ENCODE measurements at regions of chr2 and their contacts with region 1.

Region 1: GRCh38 chr2:98757904-98758421 is 27.0 kb upstream of the MGAT4A start:
- DNase-seq: peak; percentile 98
- H3K4me3 ChIP-seq: no peak overlapping the region
- H3K27ac ChIP-seq: peak overlapping the region; percentile 66
- H3K4me1 ChIP-seq: peaks cover 20% of the 10 kb centered on the region
- H3K27me3 ChIP-seq: no peaks in the 10 kb centered on the region
- CTCF ChIP-seq: peak in 1 of 2 donors; percentile 3
- POLR2A ChIP-seq: peak; percentile 62

Region 2: DNA sequence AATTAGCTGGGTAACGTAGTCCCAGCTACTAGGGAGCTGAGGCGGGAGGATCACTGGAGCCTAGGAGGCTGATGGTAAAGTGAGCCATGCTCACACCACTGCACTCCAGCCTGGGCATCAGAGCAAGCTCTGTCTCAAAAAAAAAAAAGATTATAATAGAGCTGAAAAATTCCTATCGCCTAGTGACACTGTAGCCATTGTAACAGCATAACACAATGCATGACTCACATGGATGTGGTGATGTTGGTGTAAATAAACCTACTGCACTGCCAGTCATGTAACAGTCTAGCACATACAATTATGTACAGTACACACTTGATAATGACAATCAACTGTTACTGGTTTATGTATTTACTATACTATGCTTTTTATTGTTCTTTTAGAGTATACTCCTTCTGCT is 66.7 kb before region 1 on chr2:
- CTCF ChIA-PET with region 1: no interaction called
- POLR2A ChIA-PET with region 1: no interaction called
- dilution Hi-C with region 1: no loop called
- intact Hi-C with region 1: loop called (anchors 1 kb)
- DNase-seq: peak; percentile 84
- H3K4me3 ChIP-seq: no peak overlapping the region
- H3K27ac ChIP-seq: peak overlapping the region; percentile 55
- H3K4me1 ChIP-seq: peaks cover 14% of the 10 kb centered on the region
- H3K27me3 ChIP-seq: no peaks in the 10 kb centered on the region
- CTCF ChIP-seq: no peak
- POLR2A ChIP-seq: no peak

Region 3: DNA sequence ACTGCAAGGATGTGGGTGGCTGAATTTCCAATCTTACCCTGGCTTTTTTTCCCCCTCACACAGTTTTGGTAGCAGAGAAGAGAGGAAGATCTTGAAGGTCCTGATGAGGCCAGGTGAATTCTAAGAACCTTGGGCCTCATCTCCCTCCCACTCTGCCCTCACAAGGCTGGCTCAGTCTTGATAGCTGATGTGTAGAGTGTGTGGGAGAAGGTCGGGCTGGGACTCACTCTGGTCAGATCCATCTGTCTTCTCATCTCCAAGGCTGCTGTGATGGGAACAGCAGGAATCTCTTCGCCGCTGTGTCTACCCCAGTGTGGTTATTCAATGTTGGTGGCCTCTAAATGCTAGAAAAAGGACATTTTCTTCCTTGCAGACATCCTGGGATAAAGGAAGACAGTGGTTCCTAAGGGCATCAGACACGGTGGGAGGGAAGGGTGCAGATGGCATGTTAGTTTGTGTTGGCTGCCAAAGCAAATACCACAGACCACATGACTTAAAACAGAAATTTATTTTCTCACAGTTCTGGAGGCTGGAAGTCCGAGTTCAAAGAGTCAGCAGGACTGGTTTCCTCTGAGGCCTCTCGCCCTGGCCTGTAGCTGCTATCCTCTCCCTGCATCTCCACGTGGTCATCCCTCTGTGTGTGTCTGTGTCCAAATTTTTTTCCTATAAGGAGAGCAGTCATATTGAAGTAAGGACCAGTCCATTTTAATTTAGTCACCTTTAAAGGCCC is 10.6 kb after region 1 on chr2:
- CTCF ChIA-PET with region 1: interaction called, 8 read pairs
- POLR2A ChIA-PET with region 1: no interaction called
- dilution Hi-C with region 1: no loop called
- intact Hi-C with region 1: loop called (anchors 1 kb)
- DNase-seq: peak; percentile 83
- H3K4me3 ChIP-seq: no peak overlapping the region
- H3K27ac ChIP-seq: peak overlapping the region; percentile 77
- H3K4me1 ChIP-seq: peaks cover 17% of the 10 kb centered on the region
- H3K27me3 ChIP-seq: no peaks in the 10 kb centered on the region
- CTCF ChIP-seq: no peak
- POLR2A ChIP-seq: no peak

Region 4: DNA sequence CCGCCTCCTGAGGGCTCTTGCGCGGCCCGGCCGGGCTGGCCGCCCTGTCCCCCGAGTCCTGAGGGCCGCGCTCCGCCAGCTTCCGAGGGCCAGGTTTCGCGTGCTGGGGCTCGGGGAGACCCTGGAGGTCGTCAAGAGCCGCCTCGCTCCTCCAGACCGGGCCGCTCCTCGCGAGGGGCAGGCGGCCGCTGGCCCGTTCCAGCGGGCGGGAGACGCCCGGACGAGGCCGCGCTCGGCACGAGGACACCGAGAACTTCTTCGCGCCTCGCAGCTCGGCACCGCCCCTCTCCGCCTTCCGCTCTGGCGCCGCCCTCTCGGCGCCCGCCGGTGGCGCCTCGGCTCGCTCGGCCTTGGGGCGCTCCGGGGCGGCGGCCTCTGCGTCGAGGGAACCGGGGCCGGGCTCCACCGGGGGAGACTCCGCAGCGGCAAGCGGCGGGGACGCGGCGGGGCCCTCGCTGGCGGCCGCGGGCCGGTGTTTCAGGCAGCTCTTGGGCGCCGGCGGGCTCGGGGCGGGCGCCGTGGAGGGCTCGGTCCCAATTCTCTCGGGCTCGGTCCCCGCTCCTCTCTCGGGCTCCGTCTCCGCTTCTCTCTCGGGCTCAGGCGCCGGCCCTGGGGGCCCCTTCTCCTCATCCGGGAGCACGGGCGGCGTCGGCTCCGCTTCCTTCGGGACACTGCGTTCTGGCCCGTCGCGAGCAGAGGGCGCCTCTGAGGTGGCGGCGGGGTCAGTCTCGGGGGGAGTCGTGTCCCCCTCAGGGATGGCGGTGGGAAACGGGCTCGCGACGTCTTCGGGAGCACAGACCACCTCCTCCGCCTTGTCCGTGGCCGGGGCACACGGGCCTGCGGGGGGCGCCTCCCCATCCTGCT is 64.6 kb after region 1 on chr2:
- CTCF ChIA-PET with region 1: interaction called, 5 read pairs
- POLR2A ChIA-PET with region 1: no interaction called
- dilution Hi-C with region 1: no loop called
- intact Hi-C with region 1: loop called (anchors 2 kb)
- DNase-seq: peak; percentile 38
- H3K4me3 ChIP-seq: peak overlapping the region in 2 of 3 experiments; percentile 44
- H3K27ac ChIP-seq: peak overlapping the region; percentile 53
- H3K4me1 ChIP-seq: peaks cover 11% of the 10 kb centered on the region
- H3K27me3 ChIP-seq: no peaks in the 10 kb centered on the region
- CTCF ChIP-seq: peak; percentile 33 to 64
- POLR2A ChIP-seq: no peak

Region 5: DNA sequence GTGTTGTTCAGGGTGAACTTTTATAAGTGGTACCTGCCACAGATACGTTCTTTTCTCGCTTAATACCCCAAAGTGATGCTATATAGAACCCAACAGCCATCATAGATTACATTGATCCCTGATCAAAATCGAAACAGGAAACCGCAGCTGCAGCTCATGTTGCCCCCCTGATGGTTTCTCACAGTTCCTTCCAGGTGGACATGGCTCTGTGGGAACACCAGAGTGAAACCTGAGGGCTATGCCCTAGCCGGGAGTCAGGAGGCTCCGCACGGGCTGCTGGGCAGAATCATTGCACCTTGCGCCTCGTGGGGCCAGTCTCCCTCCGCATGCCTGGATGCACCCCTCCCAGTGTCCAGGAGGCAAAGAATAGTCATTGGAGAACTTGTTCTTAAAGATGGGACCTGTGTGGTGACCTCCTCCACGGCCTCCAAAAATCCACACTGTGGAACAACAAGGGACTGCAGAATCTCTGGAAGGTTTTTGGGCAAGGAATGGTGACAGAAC is 116.3 kb after region 1 on chr2:
- CTCF ChIA-PET with region 1: no interaction called
- POLR2A ChIA-PET with region 1: no interaction called
- dilution Hi-C with region 1: no loop called
- intact Hi-C with region 1: no loop called
- DNase-seq: no peak
- H3K4me3 ChIP-seq: no peak overlapping the region
- H3K27ac ChIP-seq: no peak overlapping the region
- H3K4me1 ChIP-seq: no peaks in the 10 kb centered on the region
- H3K27me3 ChIP-seq: no peaks in the 10 kb centered on the region
- CTCF ChIP-seq: no peak
- POLR2A ChIP-seq: no peak

Region 6: GRCh38 chr2:99337113-99338028 is 579.4 kb after region 1 on chr2 and contains the start of gene EIF5B:
- CTCF ChIA-PET with region 1: no interaction called
- POLR2A ChIA-PET with region 1: no interaction called
- dilution Hi-C with region 1: no loop called
- intact Hi-C with region 1: loop called (anchors 10 kb)
- DNase-seq: peak; percentile 98
- H3K4me3 ChIP-seq: peak within 1 kb of the TSS; percentile 89 to 96 (median 91)
- H3K27ac ChIP-seq: peak within 1 kb of the TSS; percentile 68
- H3K4me1 ChIP-seq: peaks cover 20% of the 10 kb centered on the region
- H3K27me3 ChIP-seq: no peaks in the 10 kb centered on the region
- CTCF ChIP-seq: peak; percentile 57 to 75
- POLR2A ChIP-seq: peak; percentile 89
- total RNA-seq, gene EIF5B: 53.5 and 54.5 TPM in 2 replicates

Measured in endothelial cell of umbilical vein (primary cell).